ENCODE measurements at regions of chr7 and their contacts with region 1.

Region 1: GRCh38 chr7:106143711-106144337 is 31.7 kb upstream of the SYPL1 start:
- DNase-seq: no peak
- H3K4me3 ChIP-seq: no peak overlapping the region
- H3K4me3 Mint-ChIP-seq: no peak overlapping the region
- H3K27ac ChIP-seq: no peak overlapping the region
- H3K27ac Mint-ChIP-seq: no peak overlapping the region
- H3K4me1 ChIP-seq: no peaks in the 10 kb centered on the region
- H3K4me1 Mint-ChIP-seq: no peaks in the 10 kb centered on the region
- H3K27me3 ChIP-seq: no peaks in the 10 kb centered on the region
- H3K27me3 Mint-ChIP-seq: peaks cover 0 to 3% of the 10 kb centered on the region in 2 donors

Region 2: GRCh38 chr7:106112117-106112971 is 31.5 kb before region 1 on chr7 and contains the start of gene SYPL1:
- CTCF ChIA-PET with region 1: interaction called, 3 read pairs
- POLR2A ChIA-PET with region 1: interaction called, 11 read pairs
- DNase-seq: peak; percentile 91 to 96 (median 92)
- H3K4me3 ChIP-seq: peak within 1 kb of the TSS; percentile 71
- H3K4me3 Mint-ChIP-seq: peak within 1 kb of the TSS; percentile 78 to 92 (median 90)
- H3K27ac ChIP-seq: peak within 1 kb of the TSS; percentile 87
- H3K27ac Mint-ChIP-seq: peak within 1 kb of the TSS; percentile 88 to 97 (median 95)
- H3K4me1 ChIP-seq: peaks cover 73% of the 10 kb centered on the region
- H3K4me1 Mint-ChIP-seq: peaks cover 53 to 73% (median 62%) of the 10 kb centered on the region in 3 donors
- H3K27me3 ChIP-seq: no peaks in the 10 kb centered on the region
- H3K27me3 Mint-ChIP-seq: no peaks in the 10 kb centered on the region
- total RNA-seq, gene SYPL1: 33.1 to 33.7 TPM

Measured in CD8-positive, alpha-beta memory T cell (primary cell).